K562 (cell line): ENCODE measurements at regions of chr2 and their contacts with region 1.

Region 1: DNA sequence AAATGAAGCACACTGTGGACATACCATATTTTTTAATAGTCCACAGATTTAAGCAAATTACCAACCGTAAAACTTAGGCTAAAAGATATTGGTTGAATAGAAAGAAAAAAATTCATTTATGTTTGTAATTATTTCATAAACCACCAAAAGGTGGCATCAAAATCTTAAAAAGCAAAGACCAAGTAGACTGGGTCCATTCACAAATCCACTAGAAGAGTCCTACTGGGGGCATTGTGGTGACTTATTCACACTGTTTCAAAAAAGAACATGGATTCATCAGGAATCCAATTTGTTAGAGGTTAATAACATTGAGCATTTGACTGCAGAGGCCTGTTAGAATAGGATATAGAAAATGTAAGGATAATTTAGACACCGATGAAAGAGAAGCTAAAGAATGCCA is 194.9 kb upstream of the KYNU start:
- DNase-seq: no peak
- ATAC-seq: no peak
- H3K4me3 ChIP-seq: no peak overlapping the region
- H3K27ac ChIP-seq: no peak overlapping the region
- H3K4me1 ChIP-seq: no peaks in the 10 kb centered on the region
- H3K27me3 ChIP-seq: no peaks in the 10 kb centered on the region
- CTCF ChIP-seq: peak in 1 of 3 experiments; percentile 5; a peak in 1 of 6 replicates
- EP300 ChIP-seq: no peak
- POLR2A ChIP-seq: no peak
- RAD21 ChIP-seq: peak; percentile 23 to 56; a peak in 2 of 4 replicates

Region 2: GRCh38 chr2:142531377-142531776 is 151.2 kb before region 1 on chr2:
- CTCF ChIA-PET with region 1: no interaction called
- POLR2A ChIA-PET with region 1: no interaction called
- in situ Hi-C with region 1: no loop called
- intact Hi-C with region 1: no loop called
- DNase-seq: peak in 1 of 4 experiments; percentile 1
- ATAC-seq: no peak
- H3K4me3 ChIP-seq: no peak overlapping the region
- H3K27ac ChIP-seq: no peak overlapping the region
- H3K4me1 ChIP-seq: no peaks in the 10 kb centered on the region
- H3K27me3 ChIP-seq: no peaks in the 10 kb centered on the region
- CTCF ChIP-seq: no peak
- EP300 ChIP-seq: no peak
- POLR2A ChIP-seq: no peak
- RAD21 ChIP-seq: no peak

Region 3: DNA sequence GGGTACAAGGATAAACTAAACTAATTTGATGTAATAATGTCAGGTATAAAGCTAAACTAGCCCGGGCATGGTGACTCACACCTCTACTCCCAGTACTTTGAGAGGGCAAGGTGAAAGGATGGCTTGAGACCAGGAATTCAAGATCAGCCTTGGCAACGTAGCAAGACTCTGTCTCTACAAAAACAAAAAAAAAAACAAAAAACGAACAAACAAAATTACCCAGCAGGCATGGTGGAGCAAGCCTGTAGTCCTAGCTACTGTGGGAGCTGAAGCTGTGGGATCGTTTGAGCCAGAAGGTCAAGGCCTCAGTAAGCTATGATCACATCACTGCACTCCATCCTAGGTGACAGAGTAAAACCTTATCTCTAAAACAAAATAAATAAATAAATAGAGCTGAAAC is 63.2 kb after region 1 on chr2:
- CTCF ChIA-PET with region 1: no interaction called
- POLR2A ChIA-PET with region 1: no interaction called
- in situ Hi-C with region 1: no loop called
- intact Hi-C with region 1: loop called (anchors 5 kb)
- DNase-seq: peak in 1 of 4 experiments; percentile 22
- ATAC-seq: no peak
- H3K4me3 ChIP-seq: no peak overlapping the region
- H3K27ac ChIP-seq: no peak overlapping the region
- H3K4me1 ChIP-seq: no peaks in the 10 kb centered on the region
- H3K27me3 ChIP-seq: no peaks in the 10 kb centered on the region
- CTCF ChIP-seq: no peak
- EP300 ChIP-seq: no peak
- POLR2A ChIP-seq: no peak
- RAD21 ChIP-seq: no peak